GM13976 (cell line): ENCODE measurements at regions of chr22 and their contacts with region 1.

Region 1: DNA sequence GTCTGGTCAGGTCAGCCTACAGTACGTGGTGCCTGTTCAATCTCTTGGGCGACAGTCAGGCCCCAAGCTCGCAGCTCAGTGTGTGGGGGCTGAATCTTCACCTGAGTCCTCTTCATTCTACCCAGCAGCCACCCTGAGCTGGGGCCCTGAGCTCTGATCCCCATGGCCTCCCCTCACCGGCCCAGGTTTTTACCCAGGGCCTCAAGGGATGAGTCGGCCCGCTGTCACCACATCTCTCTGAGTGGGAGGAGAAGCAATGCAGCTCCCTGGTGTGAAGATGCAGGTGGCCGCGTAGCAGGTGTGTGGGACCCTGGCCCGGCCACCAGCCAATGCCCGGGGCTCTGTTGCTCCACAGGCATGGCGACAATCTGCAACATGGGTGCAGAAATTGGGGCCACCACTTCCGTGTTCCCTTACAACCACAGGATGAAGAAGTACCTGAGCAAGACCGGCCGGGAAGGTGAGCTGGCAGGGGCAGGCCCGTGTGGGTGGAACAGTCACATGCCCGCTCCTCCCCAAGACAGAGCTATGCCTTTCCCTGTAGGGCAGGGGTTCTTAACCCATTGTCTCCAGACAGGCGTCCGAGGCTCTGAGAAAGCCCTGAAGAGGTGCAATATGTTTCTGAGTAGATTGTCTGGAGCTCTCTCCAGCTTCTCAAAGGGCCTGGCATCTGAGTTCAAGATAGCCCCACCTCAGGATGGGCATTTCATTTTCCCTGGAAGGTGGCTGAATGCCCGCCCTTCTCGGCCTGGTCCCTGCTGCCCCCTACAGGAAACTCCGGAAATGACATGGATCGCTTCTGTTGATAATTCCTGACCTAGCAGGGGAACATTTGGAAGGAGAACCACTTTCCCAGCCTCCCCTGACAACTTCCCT is 26.9 kb downstream of the POLR3H start:
- DNase-seq: peak; percentile 68
- CTCF ChIP-seq: peak; percentile 48

Region 2: GRCh38 chr22:41403532-41404318 is 113.7 kb before region 1 on chr22:
- in situ Hi-C with region 1: loop called (anchors 5 kb)
- DNase-seq: peak; percentile 96
- CTCF ChIP-seq: peak; percentile 91

Region 3: GRCh38 chr22:41682033-41682807 is 164.8 kb after region 1 on chr22:
- in situ Hi-C with region 1: no loop called
- DNase-seq: peak; percentile 85
- CTCF ChIP-seq: no peak